Right cardiac atrium (tissue), 5 donors: ENCODE measurements at regions of chr4 and their contacts with region 1.

Region 1: DNA sequence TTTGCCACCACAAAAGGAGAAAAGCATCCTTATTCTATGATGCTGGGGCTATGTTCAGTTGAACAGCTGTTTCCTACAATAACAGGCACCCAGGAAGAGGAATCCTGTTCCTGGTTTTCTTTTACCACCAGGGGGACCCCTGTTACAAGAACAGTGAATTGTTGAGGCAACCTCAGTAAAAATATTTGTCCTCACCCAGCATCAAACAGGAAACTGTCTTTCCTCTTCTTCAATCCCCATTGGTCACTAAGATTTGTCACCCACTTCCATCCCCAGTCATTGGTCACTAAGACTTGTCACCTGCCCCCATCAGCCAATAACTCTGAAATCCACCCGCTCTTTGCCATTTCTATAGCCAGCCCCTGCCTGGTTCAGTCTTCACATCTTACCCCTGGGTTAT is 143.5 kb upstream of the GALNT7 start:
- DNase-seq: no peak
- ATAC-seq: peak; percentile 59 to 74
- H3K4me3 ChIP-seq: no peak overlapping the region
- H3K27ac ChIP-seq: no peak overlapping the region
- H3K4me1 ChIP-seq: no peaks in the 10 kb centered on the region
- H3K27me3 ChIP-seq: no peaks in the 10 kb centered on the region

Region 2: GRCh38 chr4:173168396-173169177 is 143.5 kb after region 1 on chr4 and contains the start of gene GALNT7:
- intact Hi-C with region 1: loop called in 1 of 4 experiments (anchors 10 kb)
- DNase-seq: peak; percentile 67 to 85 (median 85)
- ATAC-seq: peak; percentile 80 to 84
- H3K4me3 ChIP-seq: peak within 1 kb of the TSS; percentile 99
- H3K27ac ChIP-seq: peak within 1 kb of the TSS; percentile 85
- H3K4me1 ChIP-seq: no peaks in the 10 kb centered on the region
- H3K27me3 ChIP-seq: no peaks in the 10 kb centered on the region
- total RNA-seq, gene GALNT7: 7.0 to 11.0 (median 8.4) TPM

Region 3: DNA sequence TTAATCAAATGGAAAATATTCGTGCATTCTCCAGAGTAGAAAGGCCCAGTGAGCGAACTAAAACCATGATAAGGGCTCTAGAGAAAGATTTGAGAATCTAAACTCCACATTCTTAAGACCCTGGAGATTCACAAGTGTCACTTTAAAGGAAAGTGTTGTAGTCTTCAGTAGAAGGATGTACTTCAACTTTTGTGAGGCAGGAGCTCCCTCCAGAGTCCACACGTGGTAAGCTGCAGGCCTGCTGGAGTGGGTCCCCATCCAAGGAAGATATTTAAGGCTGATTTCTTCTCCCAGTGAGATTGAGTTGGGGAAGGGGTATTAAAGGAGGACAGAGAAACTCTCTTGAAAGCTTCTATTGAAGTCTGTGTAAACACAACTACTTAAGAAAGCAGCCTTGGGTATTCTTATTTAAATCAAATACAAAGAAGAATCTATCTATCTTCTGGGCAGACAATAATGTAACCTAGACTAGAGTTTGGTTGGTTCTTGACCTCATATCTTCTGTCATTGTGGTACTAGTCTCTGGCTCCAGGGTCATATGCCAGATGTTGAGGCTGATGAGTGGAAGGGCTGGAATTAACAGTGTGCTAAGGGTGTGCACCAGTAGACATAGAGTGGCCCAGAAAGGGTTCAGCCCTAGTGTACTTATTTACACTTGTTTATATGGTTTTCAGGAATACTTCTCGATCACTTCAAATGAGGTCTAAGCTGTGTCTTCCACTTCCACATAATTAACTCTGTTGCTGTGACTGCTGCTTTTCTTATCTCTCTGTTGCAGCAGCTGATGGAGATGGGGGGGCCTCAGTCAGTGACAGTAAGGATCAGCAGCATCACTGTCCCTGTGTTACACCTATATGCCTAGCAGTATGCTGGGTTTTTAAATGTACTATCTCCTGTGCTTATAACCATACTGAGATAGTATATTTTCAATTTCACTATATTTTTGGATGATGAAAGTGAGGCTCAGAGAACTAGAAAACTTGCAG is 232.9 kb after region 1 on chr4:
- intact Hi-C with region 1: loop called (anchors 2 to 5 kb)
- DNase-seq: peak; percentile 52 to 83 (median 71)
- ATAC-seq: peak; percentile 93
- H3K4me3 ChIP-seq: no peak overlapping the region
- H3K27ac ChIP-seq: no peak overlapping the region
- H3K4me1 ChIP-seq: no peaks in the 10 kb centered on the region
- H3K27me3 ChIP-seq: no peaks in the 10 kb centered on the region